ENCODE measurements at regions of chr10 and their contacts with region 1.

Region 1: DNA sequence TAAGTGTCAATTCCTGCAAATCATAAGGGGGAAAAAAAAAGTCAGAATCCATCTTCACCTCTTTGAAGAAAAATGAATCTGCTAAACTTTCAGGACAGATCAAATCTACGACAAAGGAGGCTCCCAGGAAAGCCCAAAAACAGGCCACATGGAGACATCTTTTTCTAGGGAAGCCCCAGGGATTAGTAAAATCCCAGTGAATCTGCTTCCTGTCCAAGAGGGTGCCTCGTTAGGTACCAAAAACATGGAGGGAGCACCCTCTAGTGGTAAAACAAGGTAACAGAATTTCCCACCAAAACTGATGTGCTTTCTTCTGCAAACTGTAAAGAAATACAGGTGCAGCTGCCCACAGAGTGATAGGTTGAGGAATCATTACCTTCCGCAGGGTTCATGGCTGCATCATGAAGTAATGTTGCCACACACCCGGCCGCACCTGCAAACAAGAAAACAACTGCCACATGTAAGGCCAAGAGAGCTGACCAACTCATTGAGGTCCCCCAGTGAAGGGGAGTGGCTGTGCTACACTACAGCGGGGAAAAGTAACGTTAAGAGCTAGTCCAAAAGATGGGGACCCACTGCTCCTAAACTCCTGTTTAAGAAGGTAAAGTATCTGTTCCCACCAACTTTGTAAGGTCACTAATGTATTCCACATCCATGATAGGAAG is 7.9 kb downstream of the SLC25A28 start:
- DNase-seq: no peak

Region 2: GRCh38 chr10:99395750-99396445 is 216.4 kb before region 1 on chr10:
- intact Hi-C with region 1: loop called (anchors 1 kb)
- DNase-seq: peak in 2 of 10 donors; percentile 13 to 27

Region 3: GRCh38 chr10:99435986-99436638 is 176.2 kb before region 1 on chr10:
- intact Hi-C with region 1: loop called (anchors 2 kb)
- DNase-seq: no peak

Region 4: GRCh38 chr10:99560277-99561126 is 51.8 kb before region 1 on chr10:
- intact Hi-C with region 1: loop called (anchors 1 kb)
- DNase-seq: peak in 4 of 10 donors; percentile 38 to 60 (median 44)

Region 5: GRCh38 chr10:99685597-99685967 is 73.3 kb after region 1 on chr10:
- intact Hi-C with region 1: no loop called
- DNase-seq: no peak